Heart left ventricle (tissue), 16 donors: ENCODE measurements at regions of chr7 and their contacts with region 1.

Region 1: GRCh38 chr7:5494683-5495561 is 71.3 kb upstream of the TNRC18 start:
- DNase-seq: peak; percentile 72 to 89 (median 80)
- ATAC-seq: peak; percentile 50 to 80 (median 72)
- H3K4me3 ChIP-seq: peak overlapping the region in 11 of 12 donors; percentile 8 to 43 (median 26)
- H3K27ac ChIP-seq: peak overlapping the region in 9 of 12 donors; percentile 63 to 95 (median 84)
- H3K4me1 ChIP-seq: peaks cover 0 to 42% (median 25%) of the 10 kb centered on the region in 12 donors
- H3K27me3 ChIP-seq: no peaks in the 10 kb centered on the region
- CTCF ChIP-seq: peak; percentile 87 to 98 (median 96)
- POLR2A ChIP-seq: no peak

Region 2: DNA sequence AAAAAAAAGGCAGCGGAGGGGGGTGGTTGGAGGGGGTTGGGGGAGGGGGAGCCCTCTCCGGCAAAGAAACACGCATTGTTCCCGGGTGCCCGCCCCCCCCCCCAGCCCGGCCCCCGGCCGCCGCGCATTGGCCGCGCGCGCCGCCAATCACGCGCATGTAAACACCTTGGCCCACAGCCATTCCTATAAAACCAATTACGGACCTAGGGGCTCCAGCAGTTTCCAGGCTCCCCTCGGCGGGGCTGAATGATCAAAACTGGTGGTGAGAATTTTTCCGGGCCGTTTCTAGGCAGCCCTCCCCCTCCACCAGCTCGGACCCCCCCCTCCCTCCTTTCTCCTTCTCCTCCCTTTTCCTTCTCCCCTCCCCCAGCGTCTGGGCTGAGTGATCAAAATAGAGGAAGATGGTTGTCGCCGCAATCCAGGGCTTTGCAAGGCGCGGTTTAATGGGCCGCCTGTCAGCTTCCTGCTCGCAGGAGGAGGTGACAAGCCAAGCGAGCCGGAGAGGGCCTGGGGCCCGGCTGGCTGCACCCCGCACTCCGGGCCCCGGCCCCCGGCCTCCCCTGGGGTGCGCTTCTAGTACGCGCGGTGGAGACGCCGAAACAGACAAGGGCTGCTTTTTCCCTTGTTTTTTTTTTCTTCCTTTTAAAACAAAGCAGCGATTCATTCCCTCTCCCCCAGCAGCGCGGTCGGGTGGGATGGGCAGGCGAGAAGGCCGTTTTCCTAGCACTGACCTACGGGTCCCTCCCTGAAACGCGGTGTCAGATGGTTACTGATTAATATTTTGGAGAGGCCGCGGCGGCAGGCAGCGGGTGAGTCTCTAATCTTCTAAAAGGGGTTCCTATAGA is 70.9 kb before region 1 on chr7:
- intact Hi-C with region 1: no loop called
- DNase-seq: peak; percentile 94 to 97 (median 96)
- ATAC-seq: peak; percentile 14 to 45 (median 35)
- H3K4me3 ChIP-seq: peak overlapping the region; percentile 73 to 99 (median 94)
- H3K27ac ChIP-seq: peak overlapping the region; percentile 96 to 100 (median 100)
- H3K4me1 ChIP-seq: peaks cover 0 to 33% (median 16%) of the 10 kb centered on the region in 12 donors
- H3K27me3 ChIP-seq: peaks cover 0 to 5% (median 0%) of the 10 kb centered on the region in 9 donors
- CTCF ChIP-seq: no peak
- POLR2A ChIP-seq: peak in 1 of 2 donors; percentile 60

Region 3: DNA sequence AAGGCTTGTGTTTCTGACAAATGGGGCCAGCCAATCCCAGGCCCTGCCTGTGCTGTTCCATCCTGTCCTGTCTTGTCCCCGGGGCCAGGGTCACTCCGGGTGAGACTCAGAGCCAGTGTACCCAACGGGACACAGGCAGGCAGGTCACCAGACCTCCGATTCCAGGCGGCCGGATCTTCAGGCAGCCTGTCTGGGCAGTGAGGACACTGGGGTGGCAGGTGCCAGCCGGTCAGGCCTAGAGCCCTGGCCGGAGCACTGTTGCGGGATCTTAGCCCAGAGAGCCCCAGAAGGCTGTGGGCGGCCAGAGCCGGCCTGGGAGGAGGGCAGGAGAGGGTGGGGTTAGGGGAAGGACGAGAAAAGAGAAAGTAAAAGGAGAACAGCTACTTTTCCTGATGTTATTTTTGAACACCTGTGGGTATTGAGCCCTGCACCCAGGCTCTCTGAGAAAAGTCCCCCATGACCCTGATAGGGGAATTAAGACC is 63.0 kb after region 1 on chr7:
- intact Hi-C with region 1: loop called (anchors 1 to 2 kb)
- DNase-seq: peak; percentile 68 to 90 (median 87)
- ATAC-seq: peak; percentile 26 to 56 (median 42)
- H3K4me3 ChIP-seq: peak overlapping the region in 9 of 12 donors; percentile 6 to 80 (median 28)
- H3K27ac ChIP-seq: peak overlapping the region; percentile 96 to 100 (median 99)
- H3K4me1 ChIP-seq: peaks cover 0 to 61% (median 54%) of the 10 kb centered on the region in 12 donors
- H3K27me3 ChIP-seq: no peaks in the 10 kb centered on the region
- CTCF ChIP-seq: no peak
- POLR2A ChIP-seq: peak in 1 of 2 donors; percentile 39

Region 4: DNA sequence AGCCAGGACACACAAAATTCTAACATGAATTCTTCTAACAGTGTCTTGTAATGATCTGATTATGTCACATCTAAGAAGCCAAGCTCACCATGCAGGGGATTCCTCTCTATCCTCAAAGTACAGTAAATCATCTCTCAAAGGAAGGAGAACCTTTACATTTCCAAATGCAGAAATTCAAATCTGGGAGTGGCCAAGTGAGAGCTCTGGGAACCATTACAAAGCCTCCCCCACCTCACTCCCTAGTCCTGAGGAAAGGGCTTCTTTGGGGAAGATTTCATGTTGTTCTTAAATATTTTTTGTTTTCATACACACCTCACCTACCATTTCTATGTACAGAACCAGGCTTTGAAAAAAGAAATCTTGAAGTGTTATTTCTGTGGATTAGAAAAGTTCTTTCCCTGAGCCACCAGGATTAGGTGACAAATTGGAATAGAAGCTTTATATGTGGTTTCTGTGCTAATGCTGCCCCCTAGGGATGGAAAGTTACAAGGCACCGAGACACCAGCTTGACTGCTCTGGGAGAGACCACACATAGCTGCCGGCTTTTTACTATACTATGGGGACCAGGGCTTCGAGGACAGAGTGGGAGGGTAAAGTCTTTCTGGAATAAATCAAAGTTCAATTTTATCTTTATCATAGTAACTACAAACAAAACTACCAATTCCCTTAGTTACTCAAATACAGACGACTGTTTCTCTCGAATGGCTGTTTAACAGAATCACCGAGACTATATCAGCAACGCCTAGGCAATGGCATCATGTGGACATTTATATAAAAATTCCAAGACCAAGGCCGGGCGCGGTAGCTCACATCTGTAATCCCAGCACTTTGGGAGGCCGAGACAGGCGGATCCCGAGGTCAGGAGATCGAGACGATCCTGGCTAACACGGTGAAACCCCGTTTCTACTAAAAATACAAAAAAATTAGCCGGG is 170.4 kb after region 1 on chr7:
- intact Hi-C with region 1: loop called in 4 of 10 experiments (anchors 2 to 10 kb)
- DNase-seq: peak in 4 of 5 donors; percentile 55 to 77 (median 71)
- ATAC-seq: peak; percentile 69 to 80 (median 78)
- H3K4me3 ChIP-seq: no peak overlapping the region
- H3K27ac ChIP-seq: no peak overlapping the region
- H3K4me1 ChIP-seq: peaks cover 0 to 61% (median 20%) of the 10 kb centered on the region in 12 donors
- H3K27me3 ChIP-seq: no peaks in the 10 kb centered on the region
- CTCF ChIP-seq: peak; percentile 75 to 93 (median 86)
- POLR2A ChIP-seq: no peak

Region 5: GRCh38 chr7:5677538-5678294 is 182.8 kb after region 1 on chr7:
- intact Hi-C with region 1: loop called in 8 of 10 experiments (anchors 1 to 5 kb)
- DNase-seq: peak; percentile 62 to 79 (median 70)
- ATAC-seq: peak; percentile 72 to 86 (median 78)
- H3K4me3 ChIP-seq: no peak overlapping the region
- H3K27ac ChIP-seq: peak overlapping the region in 10 of 12 donors; percentile 12 to 73 (median 56)
- H3K4me1 ChIP-seq: peaks cover 6 to 66% (median 54%) of the 10 kb centered on the region in 12 donors
- H3K27me3 ChIP-seq: no peaks in the 10 kb centered on the region
- CTCF ChIP-seq: peak; percentile 63 to 85 (median 76)
- POLR2A ChIP-seq: no peak

Region 6: GRCh38 chr7:5704534-5704922 is 209.6 kb after region 1 on chr7:
- intact Hi-C with region 1: loop called in 9 of 10 experiments (anchors 1 to 10 kb)
- DNase-seq: peak; percentile 70 to 83 (median 76)
- ATAC-seq: peak; percentile 43 to 72 (median 70)
- H3K4me3 ChIP-seq: no peak overlapping the region
- H3K27ac ChIP-seq: peak overlapping the region in 4 of 12 donors; percentile 42 to 92 (median 90)
- H3K4me1 ChIP-seq: peaks cover 0 to 52% (median 30%) of the 10 kb centered on the region in 12 donors
- H3K27me3 ChIP-seq: no peaks in the 10 kb centered on the region
- CTCF ChIP-seq: peak; percentile 88 to 97 (median 91)
- POLR2A ChIP-seq: no peak